ENCODE measurements at regions of chr3 and their contacts with region 1.

Region 1: DNA sequence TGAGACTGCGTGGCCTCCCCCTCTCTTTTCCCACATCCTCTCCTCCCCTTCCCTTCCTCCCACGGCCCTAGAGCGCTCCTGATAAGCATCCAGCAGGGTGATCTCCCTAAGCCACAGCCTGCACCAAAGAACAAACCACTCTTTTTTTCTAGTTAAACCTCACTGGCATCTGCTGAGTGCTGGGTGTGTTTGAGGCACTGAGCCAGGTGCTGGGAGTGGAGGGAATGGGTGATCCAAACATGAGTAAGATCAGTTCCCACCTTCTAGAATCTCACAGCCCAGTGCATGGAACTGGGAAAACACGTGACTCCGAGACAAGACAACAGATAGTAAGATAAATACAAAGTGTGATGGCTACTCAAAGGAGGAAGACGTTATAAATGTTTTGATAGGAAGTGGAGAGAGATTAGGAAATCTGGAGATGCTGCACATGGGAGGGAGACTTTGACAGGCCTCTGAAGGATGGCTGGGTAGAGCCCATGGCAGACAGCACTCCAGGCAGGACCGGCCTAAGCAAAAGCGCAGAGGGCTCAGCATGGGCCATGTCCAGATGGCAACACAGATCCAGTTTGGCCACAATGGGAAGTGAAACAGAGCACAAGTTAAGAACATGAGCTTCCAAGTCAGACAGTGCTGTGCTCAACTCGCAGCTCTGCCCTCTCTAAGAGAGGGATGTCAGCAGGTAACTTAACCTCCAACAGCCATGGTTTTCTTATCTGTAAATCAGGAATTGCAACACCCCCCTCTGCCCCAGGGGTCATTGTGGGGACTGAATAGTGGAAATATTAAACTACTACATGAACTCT is 55.6 kb downstream of the CCR3 start:
- DNase-seq: no peak
- H3K4me3 Mint-ChIP-seq: peak overlapping the region; percentile 34
- H3K27ac Mint-ChIP-seq: peak overlapping the region; percentile 93
- H3K4me1 Mint-ChIP-seq: peaks cover 84% of the 10 kb centered on the region
- H3K27me3 Mint-ChIP-seq: no peaks in the 10 kb centered on the region

Region 2: GRCh38 chr3:45105855-45106671 is 1191.8 kb before region 1 on chr3:
- intact Hi-C with region 1: loop called (anchors 10 kb)
- DNase-seq: peak; percentile 78
- H3K4me3 Mint-ChIP-seq: peak overlapping the region; percentile 49
- H3K27ac Mint-ChIP-seq: peak overlapping the region; percentile 69
- H3K4me1 Mint-ChIP-seq: peaks cover 69% of the 10 kb centered on the region
- H3K27me3 Mint-ChIP-seq: peaks cover 29% of the 10 kb centered on the region

Region 3: GRCh38 chr3:45817831-45818522 is 479.9 kb before region 1 on chr3:
- intact Hi-C with region 1: no loop called
- DNase-seq: no peak
- H3K4me3 Mint-ChIP-seq: no peak overlapping the region
- H3K27ac Mint-ChIP-seq: no peak overlapping the region
- H3K4me1 Mint-ChIP-seq: no peaks in the 10 kb centered on the region
- H3K27me3 Mint-ChIP-seq: peaks cover 8% of the 10 kb centered on the region

Region 4: DNA sequence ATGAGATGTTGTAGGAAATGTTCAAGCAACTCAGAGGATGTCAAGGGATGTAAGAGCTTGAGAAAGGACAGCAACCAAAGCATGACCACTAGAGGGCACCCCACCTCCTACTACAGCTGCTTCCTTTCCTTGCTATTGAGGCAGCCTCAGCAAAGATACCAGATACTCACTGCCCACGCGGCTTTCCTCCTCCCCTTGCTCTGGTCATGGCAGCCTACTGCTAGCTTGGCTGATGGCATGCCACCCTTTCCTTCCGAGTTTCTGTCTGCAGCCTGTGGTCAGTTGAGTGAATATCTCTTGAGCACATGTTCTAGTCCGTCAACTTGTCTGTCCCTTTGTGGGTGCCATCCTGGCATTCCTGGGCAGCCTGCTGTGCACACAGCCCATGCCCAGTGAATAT is 359.0 kb before region 1 on chr3:
- intact Hi-C with region 1: loop called (anchors 2 kb)
- DNase-seq: peak; percentile 77
- H3K4me3 Mint-ChIP-seq: no peak overlapping the region
- H3K27ac Mint-ChIP-seq: peak overlapping the region; percentile 0
- H3K4me1 Mint-ChIP-seq: peaks cover 53% of the 10 kb centered on the region
- H3K27me3 Mint-ChIP-seq: no peaks in the 10 kb centered on the region

Region 5: GRCh38 chr3:46098319-46098761 is 199.5 kb before region 1 on chr3:
- intact Hi-C with region 1: loop called (anchors 1 kb)
- DNase-seq: peak; percentile 70
- H3K4me3 Mint-ChIP-seq: peak overlapping the region; percentile 71
- H3K27ac Mint-ChIP-seq: peak overlapping the region; percentile 95
- H3K4me1 Mint-ChIP-seq: peaks cover 75% of the 10 kb centered on the region
- H3K27me3 Mint-ChIP-seq: peaks cover 5% of the 10 kb centered on the region

Region 6: DNA sequence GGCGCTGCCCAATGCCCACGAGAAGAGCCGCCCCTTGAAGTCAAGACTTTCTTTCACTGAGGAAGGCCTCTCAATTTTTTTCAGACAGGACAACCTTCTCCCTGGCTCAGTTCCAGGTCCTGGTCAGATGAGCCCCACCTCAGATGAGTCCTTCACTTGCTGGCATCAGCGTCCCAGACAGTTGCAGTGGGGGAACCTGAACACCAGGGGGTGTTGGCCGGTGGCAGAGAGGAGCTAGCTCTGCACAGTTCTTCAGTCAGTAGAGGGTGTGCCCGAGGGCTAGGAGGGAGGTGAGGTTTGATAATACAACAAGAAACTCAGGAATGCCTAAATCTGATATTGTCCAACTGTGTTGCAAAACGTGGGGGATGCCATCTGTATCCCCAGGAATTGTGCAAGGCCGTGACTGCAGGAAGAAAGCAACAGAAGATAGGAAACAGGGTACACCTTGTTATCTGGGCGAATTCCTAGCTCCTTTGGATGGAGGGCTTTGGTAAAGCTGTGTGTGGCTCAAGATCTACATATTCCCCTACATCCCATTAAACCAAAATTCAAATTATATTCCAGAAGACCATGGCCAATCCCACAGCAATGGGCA is 21.3 kb before region 1 on chr3:
- intact Hi-C with region 1: loop called (anchors 1 kb)
- DNase-seq: peak; percentile 68
- H3K4me3 Mint-ChIP-seq: no peak overlapping the region
- H3K27ac Mint-ChIP-seq: peak overlapping the region; percentile 21
- H3K4me1 Mint-ChIP-seq: peaks cover 62% of the 10 kb centered on the region
- H3K27me3 Mint-ChIP-seq: peaks cover 11% of the 10 kb centered on the region

Region 7: DNA sequence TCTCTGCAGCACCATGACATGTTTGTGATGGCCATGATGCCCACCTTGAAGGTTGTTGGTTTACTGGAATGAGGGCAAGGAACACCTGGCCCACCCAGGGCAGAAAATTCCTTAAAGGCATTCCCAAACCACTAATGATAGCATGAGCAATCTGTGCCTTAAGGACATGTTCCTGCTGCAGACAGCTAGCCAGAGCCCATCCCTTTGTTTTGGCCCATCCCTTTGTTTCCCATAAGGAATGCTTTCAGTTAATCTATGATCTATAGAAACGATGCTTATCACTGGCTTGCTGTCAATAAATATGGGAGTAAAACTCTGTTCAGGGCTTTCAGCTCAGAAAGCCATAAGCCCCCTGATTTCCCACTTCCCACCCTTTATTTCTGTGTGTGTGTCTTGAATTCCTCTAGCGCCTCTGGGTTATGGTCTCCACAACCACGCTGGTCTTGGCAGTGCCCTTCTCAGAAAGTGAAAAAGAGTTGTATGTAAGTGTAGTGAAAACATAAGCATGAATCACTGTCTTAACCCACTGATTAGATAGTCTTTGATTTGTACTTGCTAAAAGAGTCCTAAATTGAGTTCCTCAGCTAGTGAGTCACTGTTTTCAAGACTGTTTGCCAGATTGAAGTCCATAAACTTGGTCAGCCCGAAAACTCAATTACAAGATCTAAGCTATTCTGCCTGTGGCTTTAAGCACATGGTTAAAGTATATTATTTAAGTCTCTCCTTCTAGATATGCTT is 37.0 kb after region 1 on chr3:
- intact Hi-C with region 1: loop called (anchors 1 kb)
- DNase-seq: no peak
- H3K4me3 Mint-ChIP-seq: no peak overlapping the region
- H3K27ac Mint-ChIP-seq: peak overlapping the region; percentile 21
- H3K4me1 Mint-ChIP-seq: peaks cover 21% of the 10 kb centered on the region
- H3K27me3 Mint-ChIP-seq: peaks cover 13% of the 10 kb centered on the region

Region 8: DNA sequence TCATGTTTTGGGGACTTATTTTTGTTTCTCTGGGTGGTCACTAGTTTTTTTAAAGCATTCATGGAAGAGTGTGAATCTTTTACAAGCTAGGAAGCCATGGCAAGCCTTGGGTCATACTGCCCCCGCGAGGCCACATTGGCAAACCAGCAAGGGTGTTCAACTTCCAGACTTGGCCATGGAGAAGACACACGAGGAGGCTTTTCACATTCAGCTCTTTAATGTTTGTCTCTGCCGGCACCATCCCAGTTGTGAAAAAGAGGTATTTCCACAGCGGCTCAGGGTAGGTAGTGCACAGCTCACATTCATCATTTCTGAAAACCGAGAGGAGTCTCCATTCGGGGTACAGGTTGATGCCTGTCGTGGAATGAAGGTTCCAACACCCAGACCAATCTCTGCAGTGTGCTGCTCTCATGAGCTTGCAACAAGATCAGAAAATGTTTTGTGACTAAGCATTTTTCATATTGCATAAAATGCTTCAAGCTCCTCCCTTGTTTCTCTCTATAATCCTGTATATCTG is 80.6 kb after region 1 on chr3:
- intact Hi-C with region 1: loop called (anchors 1 kb)
- DNase-seq: peak; percentile 55
- H3K4me3 Mint-ChIP-seq: no peak overlapping the region
- H3K27ac Mint-ChIP-seq: no peak overlapping the region
- H3K4me1 Mint-ChIP-seq: peaks cover 56% of the 10 kb centered on the region
- H3K27me3 Mint-ChIP-seq: peaks cover 8% of the 10 kb centered on the region

Measured in activated T-helper 1 cell treated with anti-CD3 and anti-CD28 coated beads, Interleukin-12 subunit alpha, Interleukin-12 subunit beta, Interleukin-2, Interleukin-4 antibody, amounts not matched to agents 30 ng/mL and 10 ng/mL and 1 ng/mL, durations not matched to agents 14 hours and 24 hours and 36 hours (primary cell).